ENCODE measurements at regions of chr3 and their contacts with region 1.

Region 1: DNA sequence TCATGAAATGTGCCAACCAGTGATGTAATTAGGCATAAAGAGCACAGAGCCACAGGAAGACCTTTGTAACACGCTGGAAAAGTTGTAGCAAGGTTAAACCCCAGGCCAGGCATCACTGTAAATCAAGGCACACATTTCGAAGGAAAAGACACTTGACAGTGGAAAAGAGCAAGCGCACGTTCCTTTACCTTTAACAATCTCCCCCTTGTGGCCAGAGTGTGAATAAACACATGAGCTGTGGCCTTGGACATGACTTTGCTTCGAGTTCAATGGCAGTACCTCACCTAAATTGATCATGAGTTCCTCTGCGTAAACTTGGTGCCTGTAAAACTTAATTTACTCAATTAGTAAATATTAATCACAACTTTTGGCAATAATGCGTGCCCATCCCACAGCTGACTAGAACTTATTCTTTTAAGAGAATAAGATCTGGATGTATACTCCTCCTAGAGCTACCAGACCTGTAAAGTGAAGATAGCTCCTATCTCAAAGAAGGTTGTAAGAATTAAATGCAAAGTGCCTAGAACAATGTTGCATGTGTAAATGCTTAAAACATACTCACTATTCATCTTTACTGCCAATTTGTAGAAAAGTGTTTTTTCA is 757.0 kb upstream of the NECTIN3 start:
- H3K4me3 Mint-ChIP-seq: no peak overlapping the region
- H3K27ac Mint-ChIP-seq: no peak overlapping the region
- H3K4me1 Mint-ChIP-seq: no peaks in the 10 kb centered on the region
- H3K27me3 Mint-ChIP-seq: no peaks in the 10 kb centered on the region

Region 2: DNA sequence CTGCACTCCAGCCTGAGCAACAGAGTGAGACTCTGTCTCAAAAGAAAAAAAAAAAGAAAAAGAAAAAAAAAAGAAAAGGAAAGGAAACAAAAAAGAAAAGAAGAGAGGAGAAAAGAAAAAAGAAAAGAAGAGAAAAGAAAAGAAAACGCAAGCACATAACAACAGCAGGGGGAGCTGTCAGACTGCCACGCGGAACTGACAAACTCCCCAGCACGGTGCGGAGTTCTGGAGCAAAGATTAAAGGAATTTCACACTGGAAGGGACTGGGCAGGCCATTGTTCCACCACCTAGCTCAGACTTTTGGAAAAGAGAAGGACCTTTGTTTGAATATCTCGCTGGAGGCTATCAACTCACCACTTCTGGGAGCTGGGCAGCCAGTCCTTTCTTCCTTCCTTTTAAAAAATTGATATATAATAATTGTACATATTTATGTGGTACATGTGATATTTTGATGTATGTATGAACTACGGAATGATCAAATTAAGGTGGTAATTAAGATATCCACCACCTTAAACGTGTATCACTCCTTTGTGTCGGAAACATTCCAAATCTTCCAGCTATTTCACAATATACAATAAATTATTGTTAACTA is 1038.8 kb before region 1 on chr3:
- intact Hi-C with region 1: loop called (anchors 2 kb)
- H3K4me3 Mint-ChIP-seq: no peak overlapping the region
- H3K27ac Mint-ChIP-seq: no peak overlapping the region
- H3K4me1 Mint-ChIP-seq: no peaks in the 10 kb centered on the region
- H3K27me3 Mint-ChIP-seq: no peaks in the 10 kb centered on the region

Region 3: GRCh38 chr3:109532257-109533216 is 782.1 kb before region 1 on chr3:
- intact Hi-C with region 1: loop called (anchors 10 kb)
- H3K4me3 Mint-ChIP-seq: no peak overlapping the region
- H3K27ac Mint-ChIP-seq: no peak overlapping the region
- H3K4me1 Mint-ChIP-seq: peaks cover 12% of the 10 kb centered on the region
- H3K27me3 Mint-ChIP-seq: no peaks in the 10 kb centered on the region